ENCODE measurements at regions of chr17 and their contacts with region 1.

Region 1: GRCh38 chr17:49707608-49708514 is at the start of gene SLC35B1:
- DNase-seq: peak; percentile 99
- CTCF ChIP-seq: peak; percentile 94

Region 2: DNA sequence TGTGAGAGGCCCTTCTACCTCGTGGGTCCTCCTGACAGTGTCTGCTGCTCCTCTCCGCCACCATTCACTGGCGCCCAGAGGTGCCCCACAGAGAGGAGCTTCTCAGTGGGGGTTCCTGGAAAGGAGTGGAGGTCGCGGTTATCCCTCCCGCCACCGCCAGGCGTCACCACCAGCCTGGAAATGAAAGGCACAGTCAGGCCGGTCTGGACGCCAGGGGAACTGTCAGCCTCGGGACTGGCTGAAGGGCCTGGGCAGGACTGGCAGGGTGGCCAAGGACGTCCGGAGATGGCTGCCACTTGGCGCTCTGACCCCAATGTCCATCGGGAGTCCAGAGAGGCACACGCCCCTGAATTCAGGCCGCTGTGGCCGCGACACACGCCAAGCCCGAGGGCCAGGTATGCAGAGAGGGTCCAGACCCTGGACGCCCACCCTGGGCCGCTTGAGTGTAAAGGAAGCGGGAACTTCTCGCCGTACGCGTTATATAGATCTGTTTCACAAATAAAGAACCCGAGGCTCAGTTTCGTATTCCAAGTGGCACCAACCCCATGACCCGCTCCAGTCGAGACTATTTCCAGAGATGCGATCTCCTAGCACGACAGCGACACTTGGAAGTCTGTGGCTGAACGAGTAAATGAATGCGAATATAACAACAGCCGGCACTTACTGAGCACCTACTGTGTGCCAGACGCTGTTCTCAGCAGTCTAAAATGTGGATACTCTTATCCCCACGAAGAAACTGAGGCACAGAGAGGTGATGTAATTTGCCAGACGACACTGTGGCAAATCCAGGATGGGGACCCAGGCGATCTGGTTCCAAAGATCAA is 139.8 kb before region 1 on chr17:
- CTCF ChIA-PET with region 1: interaction called, 880 read pairs
- POLR2A ChIA-PET with region 1: no interaction called
- DNase-seq: peak; percentile 83
- CTCF ChIP-seq: peak; percentile 98

Region 3: GRCh38 chr17:49694847-49695683 is 12.8 kb before region 1 on chr17:
- CTCF ChIA-PET with region 1: interaction called, 138 read pairs
- POLR2A ChIA-PET with region 1: interaction called, 3 read pairs
- DNase-seq: peak; percentile 68
- CTCF ChIP-seq: peak; percentile 78

Region 4: GRCh38 chr17:49730078-49730784 is 22.4 kb after region 1 on chr17:
- CTCF ChIA-PET with region 1: interaction called, 21 read pairs
- POLR2A ChIA-PET with region 1: no interaction called
- DNase-seq: no peak
- CTCF ChIP-seq: no peak

Region 5: DNA sequence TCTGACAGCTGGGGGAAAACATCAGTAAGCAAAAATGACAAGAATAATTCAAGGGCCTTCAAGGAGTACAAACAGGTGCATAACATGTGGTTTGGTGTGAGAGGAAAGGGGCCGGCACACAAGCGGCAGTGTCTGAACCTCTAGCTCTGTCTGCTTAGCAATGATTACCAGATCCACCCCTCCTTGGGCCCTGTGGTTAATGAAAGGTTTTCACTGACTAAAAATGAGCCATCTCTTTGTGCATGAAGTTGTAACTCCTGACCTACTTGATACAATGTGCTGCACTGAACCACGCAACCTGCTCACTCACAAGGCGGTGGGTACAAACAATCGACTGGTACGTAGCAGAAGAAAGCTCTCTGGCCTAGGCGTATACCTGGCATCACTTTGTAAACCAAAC is 40.9 kb after region 1 on chr17:
- CTCF ChIA-PET with region 1: interaction called, 27 read pairs
- POLR2A ChIA-PET with region 1: no interaction called
- DNase-seq: peak; percentile 82
- CTCF ChIP-seq: no peak

Region 6: GRCh38 chr17:49775543-49776260 is 67.8 kb after region 1 on chr17:
- CTCF ChIA-PET with region 1: interaction called, 21 read pairs
- POLR2A ChIA-PET with region 1: interaction called, 3 read pairs
- DNase-seq: no peak
- CTCF ChIP-seq: no peak

Region 7: GRCh38 chr17:49809056-49809455 is 101.2 kb after region 1 on chr17:
- CTCF ChIA-PET with region 1: no interaction called
- POLR2A ChIA-PET with region 1: no interaction called
- DNase-seq: no peak
- CTCF ChIP-seq: no peak

Region 8: DNA sequence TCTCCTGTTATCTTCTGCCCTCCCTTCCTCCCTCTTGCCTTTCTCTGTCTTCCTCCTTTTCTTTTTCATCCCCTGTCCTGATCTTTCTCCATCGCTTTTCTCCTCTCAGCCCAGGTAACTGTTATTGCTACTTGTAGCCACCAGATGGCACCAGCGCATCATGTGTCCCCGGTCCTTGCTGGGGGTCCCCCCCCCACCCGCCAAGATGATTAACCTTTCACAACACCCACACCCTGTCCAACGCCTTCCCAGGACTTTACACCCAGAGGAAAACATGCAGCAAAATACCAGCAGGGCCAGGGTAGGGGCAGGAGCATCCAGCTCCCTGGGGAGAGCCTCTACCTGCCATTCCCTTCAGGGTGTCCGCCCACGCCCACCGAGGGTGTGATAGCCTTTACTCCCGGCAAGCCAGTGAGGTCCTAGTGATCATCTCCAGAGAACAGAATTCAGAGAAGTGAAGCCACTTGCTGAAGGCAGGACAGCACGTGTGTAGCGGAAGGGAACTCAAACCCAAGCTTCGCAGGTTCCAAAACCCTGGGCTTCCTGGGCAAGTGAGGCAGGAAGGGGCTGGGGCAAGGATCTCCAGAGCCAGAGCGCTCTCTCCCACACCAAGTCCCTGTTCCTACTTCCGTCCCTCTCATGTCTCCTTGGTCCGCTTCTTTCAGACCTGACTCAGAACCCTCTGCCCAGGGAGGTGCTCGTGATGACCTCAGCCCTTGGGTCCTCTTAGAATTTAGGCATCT is 153.5 kb after region 1 on chr17:
- CTCF ChIA-PET with region 1: no interaction called
- POLR2A ChIA-PET with region 1: no interaction called
- DNase-seq: peak; percentile 81
- CTCF ChIP-seq: peak; percentile 80